ENCODE measurements at regions of chr4 and their contacts with region 1.

Region 1: GRCh38 chr4:22607382-22607781 is 85.4 kb upstream of the GBA3 start:
- DNase-seq: peak in 8 of 9 donors; percentile 16 to 74 (median 58)
- ATAC-seq: peak; percentile 97
- H3K4me3 ChIP-seq: no peak overlapping the region
- H3K4me3 Mint-ChIP-seq: peak overlapping the region in 5 of 10 donors; percentile 22 to 63 (median 42)
- H3K27ac ChIP-seq: no peak overlapping the region
- H3K27ac Mint-ChIP-seq: peak overlapping the region in 7 of 9 donors; percentile 13 to 84 (median 62)
- H3K4me1 ChIP-seq: peaks cover 0 to 27% of the 10 kb centered on the region in 2 donors
- H3K4me1 Mint-ChIP-seq: peaks cover 13 to 51% (median 46%) of the 10 kb centered on the region in 7 donors
- H3K27me3 ChIP-seq: no peaks in the 10 kb centered on the region
- H3K27me3 Mint-ChIP-seq: no peaks in the 10 kb centered on the region

Region 2: DNA sequence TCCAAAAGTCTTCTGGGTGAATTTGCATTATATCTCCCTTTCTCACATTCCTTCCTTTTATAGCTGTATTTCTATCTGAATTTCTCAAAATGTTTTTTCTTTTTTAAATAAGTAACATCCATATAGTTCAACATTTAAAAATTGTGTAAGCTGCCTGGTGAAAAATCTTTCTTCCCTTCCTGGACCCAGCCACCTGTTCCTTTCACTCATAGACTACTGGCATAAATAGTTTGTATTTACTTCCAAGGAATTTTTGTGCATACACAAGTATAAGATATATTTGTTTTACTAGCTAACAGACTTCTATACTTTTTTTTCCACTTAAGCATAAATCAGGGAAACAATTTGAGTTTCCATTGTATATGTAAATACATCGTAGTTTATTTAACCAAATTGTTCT is 1871.5 kb before region 1 on chr4:
- CTCF ChIA-PET with region 1: no interaction called
- POLR2A ChIA-PET with region 1: no interaction called
- intact Hi-C with region 1: no loop called
- DNase-seq: no peak
- ATAC-seq: no peak
- H3K4me3 ChIP-seq: no peak overlapping the region
- H3K4me3 Mint-ChIP-seq: no peak overlapping the region
- H3K27ac ChIP-seq: no peak overlapping the region
- H3K27ac Mint-ChIP-seq: no peak overlapping the region
- H3K4me1 ChIP-seq: no peaks in the 10 kb centered on the region
- H3K4me1 Mint-ChIP-seq: peaks cover 0 to 4% (median 0%) of the 10 kb centered on the region in 7 donors
- H3K27me3 ChIP-seq: no peaks in the 10 kb centered on the region
- H3K27me3 Mint-ChIP-seq: no peaks in the 10 kb centered on the region

Region 3: GRCh38 chr4:21790438-21791029 is 816.8 kb before region 1 on chr4:
- CTCF ChIA-PET with region 1: no interaction called
- POLR2A ChIA-PET with region 1: no interaction called
- intact Hi-C with region 1: loop called in 1 of 2 experiments (anchors 1 kb)
- DNase-seq: peak in 3 of 9 donors; percentile 5 to 13 (median 13)
- ATAC-seq: no peak
- H3K4me3 ChIP-seq: no peak overlapping the region
- H3K4me3 Mint-ChIP-seq: no peak overlapping the region
- H3K27ac ChIP-seq: no peak overlapping the region
- H3K27ac Mint-ChIP-seq: no peak overlapping the region
- H3K4me1 ChIP-seq: no peaks in the 10 kb centered on the region
- H3K4me1 Mint-ChIP-seq: peaks cover 0 to 2% (median 0%) of the 10 kb centered on the region in 7 donors
- H3K27me3 ChIP-seq: no peaks in the 10 kb centered on the region
- H3K27me3 Mint-ChIP-seq: peaks cover 0 to 4% (median 0%) of the 10 kb centered on the region in 5 donors

Region 4: GRCh38 chr4:22410645-22411247 is 196.6 kb before region 1 on chr4:
- CTCF ChIA-PET with region 1: interaction called, 11 read pairs
- POLR2A ChIA-PET with region 1: no interaction called
- intact Hi-C with region 1: loop called (anchors 1 kb)
- DNase-seq: peak in 5 of 9 donors; percentile 8 to 39 (median 18)
- ATAC-seq: no peak
- H3K4me3 ChIP-seq: no peak overlapping the region
- H3K4me3 Mint-ChIP-seq: no peak overlapping the region
- H3K27ac ChIP-seq: no peak overlapping the region
- H3K27ac Mint-ChIP-seq: no peak overlapping the region
- H3K4me1 ChIP-seq: no peaks in the 10 kb centered on the region
- H3K4me1 Mint-ChIP-seq: no peaks in the 10 kb centered on the region
- H3K27me3 ChIP-seq: no peaks in the 10 kb centered on the region
- H3K27me3 Mint-ChIP-seq: no peaks in the 10 kb centered on the region

Region 5: DNA sequence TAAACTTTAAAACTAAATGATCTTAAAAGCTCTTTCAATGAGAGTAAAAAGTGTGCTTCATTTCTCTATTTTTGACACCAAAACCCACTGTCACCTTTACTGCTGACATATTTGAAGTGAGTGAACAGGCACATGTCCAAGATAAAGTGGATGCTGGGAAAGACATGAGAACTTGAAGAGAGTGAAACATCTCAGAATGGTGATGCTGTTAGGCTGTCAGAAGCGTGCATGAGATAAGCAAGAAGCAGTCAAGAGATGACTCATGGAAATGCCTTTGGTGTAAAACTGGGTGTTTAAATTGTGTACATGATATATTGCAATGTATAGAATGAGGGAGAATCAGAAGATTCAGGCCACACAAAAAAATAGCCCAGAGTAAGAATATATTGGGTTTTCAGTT is 63.6 kb after region 1 on chr4:
- CTCF ChIA-PET with region 1: interaction called, 3 read pairs
- POLR2A ChIA-PET with region 1: no interaction called
- intact Hi-C with region 1: loop called in 1 of 2 experiments (anchors 5 kb)
- DNase-seq: no peak
- ATAC-seq: no peak
- H3K4me3 ChIP-seq: no peak overlapping the region
- H3K4me3 Mint-ChIP-seq: peak overlapping the region in 3 of 10 donors; percentile 7 to 62 (median 57)
- H3K27ac ChIP-seq: no peak overlapping the region
- H3K27ac Mint-ChIP-seq: peak overlapping the region in 7 of 9 donors; percentile 12 to 94 (median 71)
- H3K4me1 ChIP-seq: peaks cover 0 to 56% of the 10 kb centered on the region in 2 donors
- H3K4me1 Mint-ChIP-seq: peaks cover 41 to 92% (median 82%) of the 10 kb centered on the region in 7 donors
- H3K27me3 ChIP-seq: no peaks in the 10 kb centered on the region
- H3K27me3 Mint-ChIP-seq: no peaks in the 10 kb centered on the region